GM18951 (cell line): ENCODE measurements at regions of chr4 and their contacts with region 1.

Region 1: GRCh38 chr4:19224820-19225219 is 1026.9 kb upstream of the SLIT2 start:
- POLR2A ChIP-seq: no peak

Region 2: GRCh38 chr4:19684084-19684483 is 459.3 kb after region 1 on chr4:
- in situ Hi-C with region 1: no loop called
- POLR2A ChIP-seq: no peak

Region 3: GRCh38 chr4:20248155-20248558 is 1023.3 kb after region 1 on chr4:
- in situ Hi-C with region 1: loop called (anchors 25 kb)
- POLR2A ChIP-seq: no peak